GM23248 (cell line): ENCODE measurements at regions of chr13 and their contacts with region 1.

Region 1: DNA sequence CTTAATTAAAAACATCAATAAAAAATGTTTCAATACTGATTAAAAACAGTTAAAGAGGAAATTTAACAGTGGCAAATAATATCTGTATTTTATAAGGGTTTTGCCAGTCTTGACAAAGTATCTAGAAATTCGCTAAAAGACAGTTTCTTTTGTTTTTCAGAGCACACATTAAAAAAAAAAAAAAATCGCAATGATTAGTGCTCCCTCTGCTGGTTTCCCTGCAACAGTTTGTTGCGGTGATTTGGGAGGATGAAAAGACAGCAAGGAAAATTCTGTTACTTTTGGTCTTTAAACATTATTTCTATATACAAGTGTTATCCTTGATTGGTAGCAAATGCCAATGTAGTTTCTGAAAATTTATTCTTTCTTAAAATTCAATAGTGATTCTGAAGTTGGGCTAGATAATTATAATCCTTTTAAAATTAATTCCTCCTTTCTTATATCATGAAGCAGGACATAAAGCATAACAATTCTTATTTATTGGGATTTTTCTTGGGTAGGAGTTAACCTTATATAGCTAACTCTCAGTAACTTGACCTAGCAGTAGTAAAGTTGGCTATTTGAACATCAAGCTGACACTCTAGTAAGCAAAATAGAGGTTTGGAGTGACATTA is 23.1 kb upstream of the SPRY2 start:
- DNase-seq: peak; percentile 67
- H3K4me3 ChIP-seq: peak overlapping the region; percentile 56
- H3K27ac ChIP-seq: no peak overlapping the region
- H3K4me1 ChIP-seq: peaks cover 5% of the 10 kb centered on the region; the same call in 1 of the 2 replicates
- H3K27me3 ChIP-seq: no peaks in the 10 kb centered on the region

Region 2: DNA sequence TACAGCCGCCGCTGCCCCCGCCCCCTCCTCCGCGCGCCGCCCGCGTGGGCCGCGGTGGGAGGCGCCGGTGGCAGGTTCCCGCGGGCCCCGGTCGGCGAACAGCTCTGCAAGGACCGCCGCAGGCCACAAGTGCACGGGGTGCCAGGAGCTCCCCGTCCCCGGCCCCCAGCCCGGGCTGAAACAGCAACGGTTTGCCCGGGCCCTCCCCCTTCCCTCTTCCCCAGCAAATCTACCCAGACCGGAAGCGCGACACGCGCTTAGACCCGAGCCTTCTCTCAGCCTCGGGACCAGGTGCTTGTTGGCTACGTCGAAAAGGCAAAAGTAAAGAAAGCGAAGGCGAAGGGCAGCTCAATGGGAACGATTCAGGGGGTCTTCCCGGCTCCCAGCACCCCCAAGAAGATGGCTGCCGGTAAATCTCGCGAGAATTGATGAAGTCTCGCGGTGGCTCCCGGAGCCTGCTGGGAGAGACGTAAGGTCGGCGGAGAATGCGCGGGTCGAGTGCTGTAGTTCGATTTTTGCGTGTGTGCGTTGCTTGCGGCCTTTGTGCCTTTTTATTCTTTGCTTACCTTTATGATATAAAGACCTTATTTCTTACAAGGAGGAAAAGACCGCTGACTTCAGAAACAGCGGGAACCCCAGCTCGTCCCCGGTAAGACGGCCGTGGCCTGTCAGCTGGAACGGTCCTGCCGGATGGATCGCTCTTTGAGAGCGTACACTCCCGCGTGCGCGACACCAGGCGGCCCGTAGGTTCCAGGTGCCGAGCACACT is 958.0 kb before region 1 on chr13 and contains the start of gene RBM26:
- in situ Hi-C with region 1: loop called (anchors 25 kb)
- DNase-seq: peak; percentile 92
- H3K4me3 ChIP-seq: peak within 1 kb of the TSS; percentile 91
- H3K27ac ChIP-seq: peak within 1 kb of the TSS; percentile 87
- H3K4me1 ChIP-seq: peaks cover 30% of the 10 kb centered on the region
- H3K27me3 ChIP-seq: no peaks in the 10 kb centered on the region
- total RNA-seq, gene RBM26: 18.2 and 19.2 TPM in 2 replicates

Region 3: GRCh38 chr13:79775830-79776229 is 588.2 kb before region 1 on chr13:
- in situ Hi-C with region 1: loop called (anchors 10 kb)
- DNase-seq: peak; percentile 78
- H3K4me3 ChIP-seq: no peak overlapping the region
- H3K27ac ChIP-seq: no peak overlapping the region
- H3K4me1 ChIP-seq: peaks cover 39% of the 10 kb centered on the region
- H3K27me3 ChIP-seq: no peaks in the 10 kb centered on the region